ENCODE measurements at regions of chr11 and their contacts with region 1.

Region 1: GRCh38 chr11:10293423-10294289 is at the start of gene SBF2:
- DNase-seq: peak; percentile 87 to 91
- H3K4me3 ChIP-seq: peak within 1 kb of the TSS; percentile 88
- H3K4me3 Mint-ChIP-seq: peak within 1 kb of the TSS; percentile 76
- H3K27ac Mint-ChIP-seq: peak within 1 kb of the TSS; percentile 74
- H3K4me1 ChIP-seq: peaks cover 12% of the 10 kb centered on the region
- H3K4me1 Mint-ChIP-seq: peaks cover 17% of the 10 kb centered on the region
- H3K27me3 ChIP-seq: no peaks in the 10 kb centered on the region
- H3K27me3 Mint-ChIP-seq: no peaks in the 10 kb centered on the region
- CTCF ChIP-seq: no peak
- total RNA-seq, gene SBF2: 56.5 and 72.2 TPM in 2 replicates

Region 2: DNA sequence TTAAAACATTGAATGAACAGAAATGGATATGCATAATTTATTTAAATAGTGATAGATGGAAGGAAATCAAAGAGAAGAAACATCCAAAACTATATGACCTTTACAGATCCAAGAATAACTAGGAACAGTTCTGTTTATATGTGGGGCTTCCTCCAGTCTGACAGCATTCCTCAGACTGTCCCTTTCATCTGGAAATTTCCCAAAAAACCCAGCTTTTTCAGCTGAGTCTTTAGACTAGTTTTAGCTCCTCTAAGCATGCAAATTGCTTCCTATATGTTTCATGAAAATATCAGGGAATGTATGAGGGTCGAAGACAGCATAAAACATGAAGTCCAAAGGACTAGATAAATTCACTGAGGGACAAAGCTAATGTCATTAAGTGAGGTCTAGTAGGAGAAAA is 130.9 kb before region 1 on chr11:
- CTCF ChIA-PET with region 1: no interaction called
- POLR2A ChIA-PET with region 1: interaction called, 19 read pairs
- intact Hi-C with region 1: no loop called
- DNase-seq: no peak
- H3K4me3 ChIP-seq: no peak overlapping the region
- H3K4me3 Mint-ChIP-seq: no peak overlapping the region
- H3K27ac Mint-ChIP-seq: no peak overlapping the region
- H3K4me1 ChIP-seq: 0 out of 2 replicates have a peak, but pooled peaks cover 7% of the 10 kb centered on the region
- H3K4me1 Mint-ChIP-seq: peaks cover 8% of the 10 kb centered on the region
- H3K27me3 ChIP-seq: no peaks in the 10 kb centered on the region
- H3K27me3 Mint-ChIP-seq: no peaks in the 10 kb centered on the region
- CTCF ChIP-seq: no peak

Region 3: GRCh38 chr11:10272132-10272531 is 21.5 kb before region 1 on chr11:
- CTCF ChIA-PET with region 1: no interaction called
- POLR2A ChIA-PET with region 1: no interaction called
- intact Hi-C with region 1: no loop called
- DNase-seq: no peak
- H3K4me3 ChIP-seq: no peak overlapping the region
- H3K4me3 Mint-ChIP-seq: no peak overlapping the region
- H3K27ac Mint-ChIP-seq: no peak overlapping the region
- H3K4me1 ChIP-seq: 0 out of 2 replicates have a peak, but pooled peaks cover 2% of the 10 kb centered on the region
- H3K4me1 Mint-ChIP-seq: no peaks in the 10 kb centered on the region
- H3K27me3 ChIP-seq: no peaks in the 10 kb centered on the region
- H3K27me3 Mint-ChIP-seq: no peaks in the 10 kb centered on the region
- CTCF ChIP-seq: no peak

Region 4: GRCh38 chr11:10322830-10323792 is 29.5 kb after region 1 on chr11:
- CTCF ChIA-PET with region 1: no interaction called
- POLR2A ChIA-PET with region 1: no interaction called
- intact Hi-C with region 1: no loop called
- DNase-seq: peak; percentile 70 to 72
- H3K4me3 ChIP-seq: no peak overlapping the region
- H3K4me3 Mint-ChIP-seq: peak overlapping the region; percentile 56
- H3K27ac Mint-ChIP-seq: peak overlapping the region; percentile 90
- H3K4me1 ChIP-seq: peaks cover 65% of the 10 kb centered on the region
- H3K4me1 Mint-ChIP-seq: peaks cover 41% of the 10 kb centered on the region
- H3K27me3 ChIP-seq: no peaks in the 10 kb centered on the region
- H3K27me3 Mint-ChIP-seq: no peaks in the 10 kb centered on the region
- CTCF ChIP-seq: peak; percentile 42 to 50